Esophagus muscularis mucosa (tissue), 4 donors: ENCODE measurements at regions of chr4 and their contacts with region 1.

Region 1: DNA sequence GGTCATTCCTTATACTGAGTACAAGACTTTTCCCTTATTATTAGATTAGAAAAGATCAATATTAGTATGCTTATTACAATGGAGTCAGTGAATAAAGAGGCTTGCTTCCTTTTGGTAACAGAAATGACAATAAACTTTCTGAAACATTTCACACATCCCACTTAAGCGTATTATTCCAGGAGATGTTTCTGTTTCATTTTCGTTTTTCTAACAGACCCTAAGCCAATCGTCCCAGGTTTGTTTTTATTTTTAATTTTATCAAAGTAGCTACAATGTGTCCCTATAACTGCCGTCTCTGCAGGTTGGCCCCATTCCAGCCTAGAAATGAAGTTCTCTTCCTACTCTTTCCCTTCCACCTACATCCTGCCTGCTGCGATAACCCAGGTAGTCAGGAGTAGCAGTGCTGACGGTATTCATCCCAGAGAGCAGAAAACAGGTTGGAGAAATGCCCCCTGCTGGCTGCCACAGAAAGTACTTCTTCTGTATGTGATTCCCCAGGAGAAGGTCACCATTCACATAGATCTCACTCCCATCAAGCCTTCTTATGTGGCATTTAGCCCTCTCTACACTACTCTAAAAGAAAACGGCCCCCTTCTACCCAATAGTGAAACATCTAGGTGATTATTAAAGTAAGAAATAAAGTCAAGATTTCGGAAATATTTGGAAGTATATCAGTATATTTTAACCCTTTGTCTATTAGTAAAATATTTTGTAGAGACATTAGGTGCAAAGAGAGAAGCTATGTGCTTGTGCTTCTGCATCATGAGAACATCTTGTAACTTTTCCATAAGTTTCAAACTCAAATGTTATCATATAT is 40.4 kb downstream of the ENPEP start:
- DNase-seq: no peak
- H3K4me3 ChIP-seq: peak overlapping the region; percentile 36 to 51 (median 50)
- H3K27ac ChIP-seq: peak overlapping the region in 2 of 4 donors; percentile 14 to 24
- H3K4me1 ChIP-seq: peaks cover 0 to 4% (median 2%) of the 10 kb centered on the region in 4 donors
- H3K27me3 ChIP-seq: no peaks in the 10 kb centered on the region
- CTCF ChIP-seq: peak; percentile 58 to 72 (median 64)
- EP300 ChIP-seq: no peak
- POLR2A ChIP-seq: no peak

Region 2: GRCh38 chr4:109998867-109999584 is 517.3 kb before region 1 on chr4:
- intact Hi-C with region 1: loop called (anchors 2 kb)
- DNase-seq: no peak
- H3K4me3 ChIP-seq: no peak overlapping the region
- H3K27ac ChIP-seq: no peak overlapping the region
- H3K4me1 ChIP-seq: no peaks in the 10 kb centered on the region
- H3K27me3 ChIP-seq: no peaks in the 10 kb centered on the region
- CTCF ChIP-seq: peak; percentile 48 to 66 (median 60)
- EP300 ChIP-seq: no peak
- POLR2A ChIP-seq: no peak

Region 3: GRCh38 chr4:110310795-110311194 is 205.5 kb before region 1 on chr4:
- intact Hi-C with region 1: loop called (anchors 10 kb)
- DNase-seq: no peak
- H3K4me3 ChIP-seq: no peak overlapping the region
- H3K27ac ChIP-seq: no peak overlapping the region
- H3K4me1 ChIP-seq: peaks cover 0 to 11% (median 2%) of the 10 kb centered on the region in 4 donors
- H3K27me3 ChIP-seq: no peaks in the 10 kb centered on the region
- CTCF ChIP-seq: no peak
- EP300 ChIP-seq: no peak
- POLR2A ChIP-seq: no peak

Region 4: GRCh38 chr4:110344162-110344561 is 172.2 kb before region 1 on chr4:
- intact Hi-C with region 1: loop called (anchors 10 kb)
- DNase-seq: no peak
- H3K4me3 ChIP-seq: no peak overlapping the region
- H3K27ac ChIP-seq: no peak overlapping the region
- H3K4me1 ChIP-seq: no peaks in the 10 kb centered on the region
- H3K27me3 ChIP-seq: no peaks in the 10 kb centered on the region
- CTCF ChIP-seq: peak in 1 of 3 experiments; percentile 17
- EP300 ChIP-seq: no peak
- POLR2A ChIP-seq: no peak